ENCODE measurements at regions of chr3 and their contacts with region 1.

Region 1: GRCh38 chr3:12796171-12797123 is at the start of gene CAND2:
- DNase-seq: no peak
- H3K4me3 ChIP-seq: peak within 1 kb of the TSS; percentile 79
- H3K27ac ChIP-seq: peak within 1 kb of the TSS; percentile 11
- H3K27me3 ChIP-seq: no peaks in the 10 kb centered on the region
- CTCF ChIP-seq: 0 out of 2 replicates have a peak, but pooled peaks have one; percentile 4
- polyA plus RNA-seq, gene CAND2: 5.8 and 7.3 TPM in 2 replicates

Region 2: GRCh38 chr3:12782172-12782815 is 14.2 kb before region 1 on chr3:
- CTCF ChIA-PET with region 1: interaction called, 18 read pairs
- POLR2A ChIA-PET with region 1: interaction called, 4 read pairs
- DNase-seq: peak; percentile 53
- H3K4me3 ChIP-seq: no peak overlapping the region
- H3K27ac ChIP-seq: no peak overlapping the region
- H3K27me3 ChIP-seq: peaks cover 7% of the 10 kb centered on the region
- CTCF ChIP-seq: no peak

Region 3: GRCh38 chr3:12810013-12810780 is 13.8 kb after region 1 on chr3:
- CTCF ChIA-PET with region 1: interaction called, 24 read pairs
- POLR2A ChIA-PET with region 1: interaction called, 14 read pairs
- DNase-seq: peak; percentile 66
- H3K4me3 ChIP-seq: peak overlapping the region; percentile 59
- H3K27ac ChIP-seq: no peak overlapping the region
- H3K27me3 ChIP-seq: no peaks in the 10 kb centered on the region
- CTCF ChIP-seq: peak; percentile 76